ENCODE measurements at regions of chr16 and their contacts with region 1.

Region 1: GRCh38 chr16:31157136-31157535 is 7.3 kb upstream of the PRSS36 start:
- DNase-seq: no peak
- H3K4me3 ChIP-seq: no peak overlapping the region
- CTCF ChIP-seq: no peak

Region 2: GRCh38 chr16:31168848-31169247 is 11.7 kb after region 1 on chr16:
- CTCF ChIA-PET with region 1: interaction called, 35 read pairs
- POLR2A ChIA-PET with region 1: no interaction called
- DNase-seq: no peak
- H3K4me3 ChIP-seq: no peak overlapping the region
- CTCF ChIP-seq: no peak

Measured in AG04449 (cell line).